Activated T-helper 1 cell treated with anti-CD3 and anti-CD28 coated beads, Interleukin-12 subunit alpha, Interleukin-12 subunit beta, Interleukin-2, Interleukin-4 antibody, amounts not matched to agents 30 ng/mL and 10 ng/mL and 1 ng/mL, durations not matched to agents 14 hours and 24 hours and 36 hours (primary cell): ENCODE measurements at regions of chr1 and their contacts with region 1.

Region 1: GRCh38 chr1:221741711-221742554 is at the start of gene DUSP10:
- DNase-seq: peak; percentile 99
- H3K4me3 Mint-ChIP-seq: no peak within 1 kb of the TSS
- H3K27ac Mint-ChIP-seq: peak within 1 kb of the TSS; percentile 77
- H3K4me1 Mint-ChIP-seq: peaks cover 9% of the 10 kb centered on the region
- H3K27me3 Mint-ChIP-seq: no peaks in the 10 kb centered on the region
- total RNA-seq, gene DUSP10: 19.2 and 19.4 TPM in 2 replicates

Region 2: DNA sequence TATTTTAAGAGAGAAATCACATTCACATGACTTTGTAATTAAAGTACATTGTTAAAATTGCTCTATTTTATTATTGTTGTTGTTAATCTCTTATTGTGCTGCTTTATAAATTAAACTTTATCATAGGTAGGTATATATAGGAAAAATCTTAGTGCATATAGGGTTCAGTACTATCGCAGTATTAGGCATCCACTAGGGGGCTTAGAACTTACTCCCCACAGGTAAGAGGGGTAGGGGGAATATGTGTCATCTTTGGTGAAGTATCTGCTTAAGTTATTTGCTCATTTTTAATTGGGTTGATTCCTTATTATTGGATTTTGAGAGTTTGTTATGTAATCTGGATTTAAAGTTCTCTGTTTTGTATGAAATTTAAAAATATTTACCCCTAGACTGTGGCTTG is 385.2 kb before region 1 on chr1:
- intact Hi-C with region 1: no loop called
- DNase-seq: no peak
- H3K4me3 Mint-ChIP-seq: no peak overlapping the region
- H3K27ac Mint-ChIP-seq: no peak overlapping the region
- H3K4me1 Mint-ChIP-seq: no peaks in the 10 kb centered on the region
- H3K27me3 Mint-ChIP-seq: no peaks in the 10 kb centered on the region

Region 3: DNA sequence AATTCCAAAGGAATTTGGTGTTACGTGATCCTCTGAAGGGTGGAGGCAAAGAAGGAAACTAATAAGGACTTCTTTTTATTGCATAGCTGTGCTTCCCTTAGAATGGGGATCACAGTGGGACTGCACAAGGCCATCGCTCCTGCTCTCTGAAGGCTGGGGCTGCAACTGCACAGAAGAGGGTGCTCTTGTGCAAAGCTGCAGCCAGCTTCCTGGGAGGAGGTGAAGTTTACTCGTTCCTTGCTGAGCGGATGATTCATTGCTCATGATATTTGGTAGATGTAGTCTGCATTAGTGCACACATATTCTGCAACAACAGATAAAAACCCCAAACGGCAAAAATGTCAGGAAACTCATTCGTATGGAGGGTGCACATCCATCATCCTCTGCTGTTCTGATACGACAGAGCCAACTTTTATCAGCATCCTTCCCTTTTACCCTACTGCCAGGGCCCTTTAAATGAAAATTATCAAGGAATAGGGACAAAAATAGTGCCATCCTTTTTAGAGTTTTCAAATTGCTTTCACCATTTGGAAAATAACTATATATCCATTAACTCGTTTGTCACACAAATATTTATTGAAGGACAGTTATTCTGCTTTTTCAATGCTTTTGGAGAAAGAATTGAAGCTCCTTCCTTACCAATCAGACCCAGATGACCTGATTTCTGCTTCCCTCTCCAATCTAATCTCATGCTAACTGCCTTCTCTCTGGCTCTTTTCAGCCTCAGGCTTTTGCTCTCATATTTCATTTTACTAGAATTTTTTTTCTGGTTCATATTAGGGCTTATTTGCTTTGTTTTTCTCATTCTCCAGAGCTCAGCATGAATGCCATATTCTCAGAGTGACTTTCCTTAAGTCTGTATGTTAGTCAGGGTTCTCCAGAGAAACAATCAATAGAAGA is 263.6 kb before region 1 on chr1:
- intact Hi-C with region 1: loop called (anchors 1 kb)
- DNase-seq: peak; percentile 31
- H3K4me3 Mint-ChIP-seq: no peak overlapping the region
- H3K27ac Mint-ChIP-seq: no peak overlapping the region
- H3K4me1 Mint-ChIP-seq: peaks cover 5% of the 10 kb centered on the region
- H3K27me3 Mint-ChIP-seq: peaks cover 5% of the 10 kb centered on the region

Region 4: DNA sequence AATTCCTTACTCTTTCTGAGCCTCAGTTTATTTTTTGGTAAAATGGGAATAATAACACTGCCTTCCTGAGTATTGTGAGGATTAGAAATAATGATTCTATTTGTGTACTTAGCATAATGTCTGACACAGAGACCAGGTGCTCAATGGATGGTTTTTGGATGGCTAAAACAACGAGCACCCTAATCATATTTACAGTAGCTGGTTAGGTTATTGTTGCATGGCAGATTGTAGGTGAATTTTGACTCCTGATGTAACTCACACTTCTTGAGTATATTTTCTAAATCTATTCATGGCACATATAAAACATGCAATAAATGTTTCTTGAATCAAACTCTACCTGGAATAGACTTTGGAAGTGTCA is 11.9 kb after region 1 on chr1:
- intact Hi-C with region 1: loop called (anchors 1 kb)
- DNase-seq: no peak
- H3K4me3 Mint-ChIP-seq: peak overlapping the region; percentile 59
- H3K27ac Mint-ChIP-seq: peak overlapping the region; percentile 82
- H3K4me1 Mint-ChIP-seq: peaks cover 69% of the 10 kb centered on the region
- H3K27me3 Mint-ChIP-seq: no peaks in the 10 kb centered on the region

Region 5: GRCh38 chr1:221829327-221830015 is 87.5 kb after region 1 on chr1:
- intact Hi-C with region 1: loop called (anchors 1 kb)
- DNase-seq: peak; percentile 48
- H3K4me3 Mint-ChIP-seq: peak overlapping the region; percentile 73
- H3K27ac Mint-ChIP-seq: peak overlapping the region; percentile 97
- H3K4me1 Mint-ChIP-seq: peaks cover 91% of the 10 kb centered on the region
- H3K27me3 Mint-ChIP-seq: no peaks in the 10 kb centered on the region

Region 6: DNA sequence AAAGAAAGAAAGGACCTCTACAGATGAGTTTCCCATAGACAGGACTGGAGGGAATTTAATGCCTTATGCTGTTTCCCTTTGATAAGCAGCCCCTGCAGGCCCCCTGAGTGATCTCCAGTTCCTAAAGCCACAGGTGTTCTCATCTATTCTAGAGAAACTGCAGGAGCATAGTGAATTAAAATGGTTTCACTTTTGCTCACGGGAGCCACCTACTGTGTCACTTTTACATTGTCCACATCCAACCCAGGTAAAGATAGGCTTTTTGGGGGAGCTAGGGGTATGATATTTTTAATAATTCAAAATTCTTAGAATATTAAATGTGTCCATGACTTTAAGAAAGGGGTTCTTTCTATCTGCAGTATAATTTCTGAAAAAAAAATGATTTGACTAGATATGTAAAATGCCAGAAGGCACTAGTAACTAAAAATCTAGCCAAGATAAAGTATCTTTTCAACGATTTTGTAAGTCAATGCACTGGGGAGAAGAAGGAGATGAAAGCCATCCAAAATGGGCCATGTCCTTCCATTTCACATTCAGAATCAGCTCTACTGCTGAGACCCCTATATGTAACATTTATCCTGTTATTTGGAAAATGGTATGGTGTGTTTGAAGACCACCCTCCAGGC is 267.3 kb after region 1 on chr1:
- intact Hi-C with region 1: loop called (anchors 2 kb)
- DNase-seq: peak; percentile 10
- H3K4me3 Mint-ChIP-seq: no peak overlapping the region
- H3K27ac Mint-ChIP-seq: no peak overlapping the region
- H3K4me1 Mint-ChIP-seq: peaks cover 4% of the 10 kb centered on the region
- H3K27me3 Mint-ChIP-seq: peaks cover 18% of the 10 kb centered on the region

Region 7: DNA sequence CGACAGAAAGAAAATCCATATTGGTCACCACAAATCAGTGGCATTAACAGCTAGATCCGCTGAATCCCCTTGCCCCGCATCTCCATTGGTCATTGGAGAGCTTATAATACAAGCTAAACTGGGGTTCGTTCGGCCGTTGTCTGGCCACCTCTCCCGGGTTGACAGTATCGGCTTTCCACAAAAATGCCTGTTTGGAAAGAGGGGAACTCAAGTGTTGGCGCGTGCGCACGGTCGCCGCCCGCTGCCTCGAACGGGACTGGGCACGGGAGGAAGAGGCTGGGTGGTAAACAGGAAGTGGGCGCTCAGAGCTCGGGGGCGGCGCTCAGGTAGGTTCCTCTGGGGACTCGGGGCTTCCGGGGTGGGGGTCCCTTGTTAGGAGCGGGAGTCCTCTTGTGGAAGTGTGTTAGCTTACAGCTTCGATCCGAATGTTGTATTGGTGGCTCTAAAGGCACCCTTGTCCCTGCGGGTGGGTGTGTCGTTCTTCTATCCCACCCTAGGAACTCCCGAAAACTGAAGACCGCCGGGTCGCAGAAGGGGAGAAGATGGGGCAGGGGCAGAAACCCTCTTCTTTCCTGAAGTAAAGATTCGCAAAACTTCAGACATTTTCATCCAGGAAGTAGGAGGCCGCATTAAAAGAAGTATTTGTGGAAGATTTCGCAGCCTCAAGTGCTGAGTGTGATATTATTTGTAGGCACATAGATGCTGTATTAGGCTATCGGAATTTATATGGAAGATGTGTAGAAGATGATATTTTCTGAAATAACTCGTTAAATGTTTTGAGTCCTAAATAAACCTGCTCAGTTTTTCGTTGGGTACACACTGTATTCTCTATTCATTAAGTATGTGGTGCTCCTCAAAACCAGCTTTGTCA is 971.4 kb after region 1 on chr1:
- intact Hi-C with region 1: loop called (anchors 10 kb)
- DNase-seq: peak; percentile 85
- H3K4me3 Mint-ChIP-seq: peak overlapping the region; percentile 94
- H3K27ac Mint-ChIP-seq: peak overlapping the region; percentile 99
- H3K4me1 Mint-ChIP-seq: peaks cover 57% of the 10 kb centered on the region
- H3K27me3 Mint-ChIP-seq: no peaks in the 10 kb centered on the region